Heart left ventricle (tissue), 16 donors: ENCODE measurements at regions of chr5 and their contacts with region 1.

Region 1: GRCh38 chr5:153964880-153965645 is 73.6 kb downstream of the FAM114A2 start:
- DNase-seq: peak in 2 of 5 donors; percentile 35 to 39
- ATAC-seq: peak; percentile 60 to 82 (median 76)
- H3K4me3 ChIP-seq: peak overlapping the region in 2 of 12 donors; percentile 34 to 37
- H3K27ac ChIP-seq: no peak overlapping the region
- H3K4me1 ChIP-seq: peaks cover 0 to 9% (median 0%) of the 10 kb centered on the region in 12 donors
- H3K27me3 ChIP-seq: no peaks in the 10 kb centered on the region
- CTCF ChIP-seq: peak; percentile 70 to 93 (median 87)
- POLR2A ChIP-seq: no peak

Region 2: GRCh38 chr5:152532714-152533113 is 1432.3 kb before region 1 on chr5:
- intact Hi-C with region 1: loop called (anchors 2 to 5 kb)
- DNase-seq: no peak
- ATAC-seq: no peak
- H3K4me3 ChIP-seq: no peak overlapping the region
- H3K27ac ChIP-seq: no peak overlapping the region
- H3K4me1 ChIP-seq: peaks cover 0 to 6% (median 0%) of the 10 kb centered on the region in 12 donors
- H3K27me3 ChIP-seq: no peaks in the 10 kb centered on the region
- CTCF ChIP-seq: peak; percentile 16 to 69 (median 56)
- POLR2A ChIP-seq: no peak

Region 3: DNA sequence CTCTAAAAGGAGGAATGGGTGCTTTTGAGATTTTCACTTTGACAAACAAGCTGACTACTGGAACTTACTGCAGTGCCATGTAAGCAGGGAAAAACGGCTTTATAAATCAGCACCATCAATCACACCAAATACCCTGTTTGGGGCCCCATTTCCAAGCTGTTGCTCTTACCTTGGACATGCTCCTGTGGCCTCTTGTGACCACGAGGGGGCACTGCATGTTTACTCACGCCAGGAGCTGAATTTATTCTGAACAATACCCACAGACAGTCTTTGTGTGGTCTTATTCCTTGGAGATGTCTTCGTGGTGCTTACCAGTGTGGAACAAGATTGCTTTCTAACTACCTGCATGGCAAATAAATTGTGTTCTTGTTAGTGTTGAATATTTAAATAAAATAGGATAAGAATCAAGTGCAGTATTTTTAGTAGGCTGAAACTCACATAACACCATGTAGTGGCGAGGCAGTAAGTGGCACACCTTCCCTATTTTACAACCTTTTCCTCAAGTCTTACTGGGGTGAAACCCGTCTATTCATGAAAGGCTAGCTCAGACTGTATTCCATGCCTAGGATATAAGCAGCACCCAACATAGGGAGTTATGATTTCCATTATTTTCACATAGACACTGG is 1404.4 kb before region 1 on chr5:
- intact Hi-C with region 1: loop called in 2 of 10 experiments (anchors 10 kb)
- DNase-seq: peak; percentile 50 to 71 (median 64)
- ATAC-seq: peak in 3 of 4 donors; percentile 62 to 72 (median 64)
- H3K4me3 ChIP-seq: no peak overlapping the region
- H3K27ac ChIP-seq: no peak overlapping the region
- H3K4me1 ChIP-seq: no peaks in the 10 kb centered on the region
- H3K27me3 ChIP-seq: no peaks in the 10 kb centered on the region
- CTCF ChIP-seq: peak; percentile 65 to 92 (median 82)
- POLR2A ChIP-seq: no peak